ENCODE measurements at regions of chr3 and their contacts with region 1.

Region 1: GRCh38 chr3:108477511-108478147 is 32.8 kb downstream of the MYH15 start:
- DNase-seq: peak; percentile 49 to 58
- H3K4me3 ChIP-seq: no peak overlapping the region
- H3K27ac ChIP-seq: no peak overlapping the region
- H3K4me1 ChIP-seq: peaks cover 24% of the 10 kb centered on the region
- H3K27me3 ChIP-seq: no peaks in the 10 kb centered on the region
- CTCF ChIP-seq: peak; percentile 96

Region 2: GRCh38 chr3:107660306-107660976 is 817.2 kb before region 1 on chr3:
- CTCF ChIA-PET with region 1: interaction called, 6 read pairs
- POLR2A ChIA-PET with region 1: no interaction called
- intact Hi-C with region 1: loop called (anchors 5 kb)
- DNase-seq: peak in 1 of 2 experiments; percentile 53
- H3K4me3 ChIP-seq: no peak overlapping the region
- H3K27ac ChIP-seq: no peak overlapping the region
- H3K4me1 ChIP-seq: no peaks in the 10 kb centered on the region
- H3K27me3 ChIP-seq: no peaks in the 10 kb centered on the region
- CTCF ChIP-seq: peak; percentile 92

Region 3: DNA sequence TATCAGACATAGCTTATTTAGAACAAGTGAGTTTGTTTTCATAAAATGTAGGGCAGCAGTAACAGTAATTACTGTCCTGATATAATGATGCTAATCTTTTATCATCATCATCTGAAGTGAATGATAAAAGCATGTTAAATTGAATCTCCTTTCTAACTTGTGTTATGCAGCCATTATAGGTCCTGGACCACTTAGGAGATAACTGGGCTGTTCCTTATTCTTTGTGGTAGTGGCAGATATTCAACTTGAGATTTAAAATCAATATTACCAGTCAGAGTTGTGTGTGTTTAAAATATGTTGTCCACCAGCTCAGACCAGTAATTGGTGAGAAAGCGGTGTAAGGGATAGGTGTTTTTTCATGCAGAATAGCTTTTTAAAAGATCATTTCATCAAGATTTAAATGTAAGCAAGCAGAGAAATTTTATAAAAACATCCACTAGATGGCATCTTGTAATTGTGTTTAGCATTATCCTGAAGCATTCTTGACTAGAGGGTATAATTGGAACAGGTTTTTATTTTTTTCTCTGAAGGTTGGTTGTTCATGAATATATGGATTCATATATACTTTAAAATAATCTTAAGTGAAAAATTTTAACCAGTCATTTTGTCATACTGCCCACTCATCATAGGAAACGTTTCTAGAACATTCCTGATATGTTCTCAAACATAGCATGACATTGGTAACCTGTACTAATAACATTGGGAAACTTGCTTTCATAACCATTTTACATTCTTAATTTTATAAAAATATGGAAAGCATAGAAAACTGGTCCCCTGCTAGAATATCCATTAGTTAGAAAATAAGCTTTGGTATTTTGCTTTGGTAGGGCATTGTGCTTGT is 800.9 kb before region 1 on chr3:
- CTCF ChIA-PET with region 1: interaction called, 5 read pairs
- POLR2A ChIA-PET with region 1: no interaction called
- intact Hi-C with region 1: loop called (anchors 5 kb)
- DNase-seq: peak in 1 of 2 experiments; percentile 57
- H3K4me3 ChIP-seq: no peak overlapping the region
- H3K27ac ChIP-seq: no peak overlapping the region
- H3K4me1 ChIP-seq: no peaks in the 10 kb centered on the region
- H3K27me3 ChIP-seq: no peaks in the 10 kb centered on the region
- CTCF ChIP-seq: peak; percentile 86

Region 4: DNA sequence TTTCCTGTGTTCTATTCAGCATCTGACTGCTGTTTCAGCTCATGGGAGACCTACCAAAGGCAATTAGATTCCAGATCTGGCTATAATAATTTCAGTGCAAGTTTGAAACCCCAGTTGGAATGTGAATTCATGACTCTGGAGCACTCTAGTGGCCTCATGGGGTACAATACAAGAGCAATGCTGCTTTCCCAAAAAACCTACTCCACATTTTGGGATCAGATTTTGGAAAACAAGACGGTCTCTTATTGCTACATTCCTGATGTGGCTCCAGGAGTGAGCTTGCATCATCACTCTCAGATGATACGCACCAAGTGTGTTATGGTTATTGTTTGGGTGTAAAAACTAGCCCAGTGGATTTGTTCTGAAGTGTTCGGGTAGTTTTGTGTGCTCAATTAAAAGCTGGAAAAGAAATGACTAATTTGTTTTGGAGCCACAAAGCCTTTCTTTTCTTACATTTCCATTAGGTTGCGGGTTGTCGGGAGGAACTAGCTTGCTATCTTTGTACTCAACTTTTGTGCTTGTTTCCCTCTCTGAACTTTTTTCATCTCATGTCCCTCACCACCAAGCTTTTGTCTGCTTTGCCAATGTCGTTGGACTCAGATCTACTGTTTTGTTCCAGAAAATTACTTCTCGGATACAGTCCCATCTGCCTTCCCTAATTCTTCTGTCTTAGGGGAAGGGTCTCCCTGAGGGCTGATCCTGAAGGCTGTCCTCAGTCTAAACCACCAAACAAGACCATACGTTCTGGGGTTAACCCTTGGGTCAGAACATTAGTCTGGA is 682.8 kb before region 1 on chr3:
- CTCF ChIA-PET with region 1: no interaction called
- POLR2A ChIA-PET with region 1: no interaction called
- intact Hi-C with region 1: loop called (anchors 10 kb)
- DNase-seq: no peak
- H3K4me3 ChIP-seq: no peak overlapping the region
- H3K27ac ChIP-seq: no peak overlapping the region
- H3K4me1 ChIP-seq: peaks cover 27% of the 10 kb centered on the region
- H3K27me3 ChIP-seq: no peaks in the 10 kb centered on the region
- CTCF ChIP-seq: peak; percentile 55; the same call in 1 of the 2 replicates

Region 5: DNA sequence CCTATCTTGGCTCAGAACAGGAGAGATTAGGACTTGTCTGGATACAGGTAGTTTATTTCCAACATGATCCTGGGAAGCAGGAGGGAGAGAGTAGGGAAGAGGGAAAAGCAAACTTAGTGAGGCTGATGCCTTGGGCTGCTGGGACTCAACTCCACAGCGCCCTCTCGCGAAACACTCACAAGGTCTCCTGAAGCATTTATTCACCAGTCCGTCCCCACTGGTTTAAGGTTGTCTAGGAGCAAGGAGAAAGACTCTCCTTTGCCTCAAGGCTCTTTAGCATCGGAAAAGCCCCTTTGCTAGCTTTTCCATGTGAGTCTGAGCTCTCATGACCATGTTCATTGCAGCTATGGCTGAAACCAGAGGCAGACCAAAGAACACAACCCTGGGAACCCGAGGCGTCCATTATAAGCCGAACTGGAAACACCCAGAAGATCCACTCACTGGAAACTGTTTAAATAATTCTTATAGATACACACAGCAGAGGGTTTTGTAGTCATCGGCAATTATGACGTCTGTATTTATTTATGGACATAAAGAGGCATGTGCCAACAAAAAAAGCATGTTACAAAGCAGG is 631.3 kb before region 1 on chr3:
- CTCF ChIA-PET with region 1: no interaction called
- POLR2A ChIA-PET with region 1: no interaction called
- intact Hi-C with region 1: loop called (anchors 5 kb)
- DNase-seq: peak in 1 of 2 experiments; percentile 59
- H3K4me3 ChIP-seq: no peak overlapping the region
- H3K27ac ChIP-seq: no peak overlapping the region
- H3K4me1 ChIP-seq: peaks cover 7% of the 10 kb centered on the region; the same call in 1 of the 2 replicates
- H3K27me3 ChIP-seq: no peaks in the 10 kb centered on the region
- CTCF ChIP-seq: peak; percentile 76

Region 6: GRCh38 chr3:108053067-108053466 is 424.6 kb before region 1 on chr3:
- CTCF ChIA-PET with region 1: no interaction called
- POLR2A ChIA-PET with region 1: no interaction called
- intact Hi-C with region 1: loop called (anchors 10 kb)
- DNase-seq: peak; percentile 73 to 76
- H3K4me3 ChIP-seq: no peak overlapping the region
- H3K27ac ChIP-seq: 0 out of 2 replicates have a peak overlapping the region, but pooled peaks have one; percentile 0
- H3K4me1 ChIP-seq: peaks cover 13% of the 10 kb centered on the region
- H3K27me3 ChIP-seq: no peaks in the 10 kb centered on the region
- CTCF ChIP-seq: no peak

Region 7: DNA sequence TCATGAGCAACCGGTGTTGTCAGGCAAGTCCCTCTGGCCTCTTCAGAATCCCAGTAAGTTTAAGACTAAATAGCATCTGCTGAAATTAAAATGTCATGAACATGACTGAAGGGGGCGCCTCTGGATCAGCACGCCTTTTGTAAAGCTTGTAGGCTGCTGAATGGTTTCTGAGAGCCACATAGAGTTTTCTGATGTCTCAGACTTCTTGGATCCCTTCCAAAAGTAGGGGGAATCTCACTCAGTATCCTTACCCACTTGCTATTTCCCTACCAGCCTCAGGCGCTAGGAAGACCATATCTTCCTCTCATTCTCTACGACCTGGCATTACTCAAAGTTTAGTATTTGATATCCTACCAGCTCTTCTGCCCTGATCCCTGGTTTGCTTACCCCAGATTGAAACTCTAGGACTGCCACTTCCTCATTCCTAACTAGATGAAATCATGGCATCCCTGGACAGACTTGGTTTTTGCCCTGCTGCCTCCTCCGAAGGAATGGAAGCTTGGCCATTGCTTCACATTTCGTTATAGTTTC is 324.1 kb before region 1 on chr3:
- CTCF ChIA-PET with region 1: interaction called, 3 read pairs
- POLR2A ChIA-PET with region 1: no interaction called
- intact Hi-C with region 1: loop called (anchors 2 kb)
- DNase-seq: peak; percentile 54 to 75
- H3K4me3 ChIP-seq: no peak overlapping the region
- H3K27ac ChIP-seq: no peak overlapping the region
- H3K4me1 ChIP-seq: no peaks in the 10 kb centered on the region; the same call in 1 of the 2 replicates
- H3K27me3 ChIP-seq: no peaks in the 10 kb centered on the region
- CTCF ChIP-seq: peak; percentile 59

Region 8: GRCh38 chr3:108180194-108180593 is 297.4 kb before region 1 on chr3:
- CTCF ChIA-PET with region 1: no interaction called
- POLR2A ChIA-PET with region 1: no interaction called
- intact Hi-C with region 1: no loop called
- DNase-seq: peak in 1 of 2 experiments; percentile 65
- H3K4me3 ChIP-seq: no peak overlapping the region
- H3K27ac ChIP-seq: peak overlapping the region; percentile 4; the same call in 1 of the 2 replicates
- H3K4me1 ChIP-seq: 0 out of 2 replicates have a peak, but pooled peaks cover 7% of the 10 kb centered on the region
- H3K27me3 ChIP-seq: no peaks in the 10 kb centered on the region
- CTCF ChIP-seq: no peak

Region 9: DNA sequence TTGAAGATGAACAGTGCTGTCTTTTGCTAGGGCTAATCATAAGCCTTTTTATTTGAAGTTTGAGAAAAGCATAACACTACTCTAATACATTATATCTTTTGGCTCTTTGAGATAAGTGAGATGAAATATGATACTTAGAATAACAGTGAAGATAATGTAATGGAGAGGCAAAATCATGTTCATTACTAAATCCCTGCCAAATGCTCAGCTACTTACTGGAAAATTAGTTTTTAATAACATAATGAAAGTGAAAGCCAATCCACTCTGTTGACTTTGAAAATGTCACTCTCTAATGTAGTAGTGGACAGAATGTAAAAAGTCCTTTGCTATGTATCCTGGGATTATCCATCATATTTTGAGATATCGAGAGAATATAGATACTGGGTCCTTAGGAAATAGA is 68.6 kb after region 1 on chr3:
- CTCF ChIA-PET with region 1: no interaction called
- POLR2A ChIA-PET with region 1: no interaction called
- intact Hi-C with region 1: no loop called
- DNase-seq: no peak
- H3K4me3 ChIP-seq: no peak overlapping the region
- H3K27ac ChIP-seq: no peak overlapping the region
- H3K4me1 ChIP-seq: no peaks in the 10 kb centered on the region
- H3K27me3 ChIP-seq: no peaks in the 10 kb centered on the region
- CTCF ChIP-seq: no peak

Measured in PC-9 (cell line).